Vagina (tissue), 2 donors: ENCODE measurements at regions of chr20 and their contacts with region 1.

Region 1: GRCh38 chr20:37282556-37282955 is 6.9 kb upstream of the MANBAL start:
- DNase-seq: no peak
- H3K4me3 ChIP-seq: no peak overlapping the region
- H3K27ac ChIP-seq: peak overlapping the region; percentile 53
- H3K4me1 ChIP-seq: no peaks in the 10 kb centered on the region
- H3K27me3 ChIP-seq: no peaks in the 10 kb centered on the region
- CTCF ChIP-seq: peak in 2 of 3 experiments; percentile 30 to 44
- POLR2A ChIP-seq: no peak

Region 2: GRCh38 chr20:37384683-37385174 is 102.2 kb after region 1 on chr20:
- intact Hi-C with region 1: loop called (anchors 5 kb)
- DNase-seq: no peak
- H3K4me3 ChIP-seq: peak overlapping the region; percentile 43 to 55
- H3K27ac ChIP-seq: peak overlapping the region; percentile 47
- H3K4me1 ChIP-seq: peaks cover 17% of the 10 kb centered on the region
- H3K27me3 ChIP-seq: no peaks in the 10 kb centered on the region
- CTCF ChIP-seq: peak; percentile 90 to 97 (median 95)
- POLR2A ChIP-seq: no peak